ENCODE measurements at regions of chr21 and their contacts with region 1.

Region 1: GRCh38 chr21:39388038-39388810 is 39.3 kb upstream of the HMGN1 start:
- H3K4me3 Mint-ChIP-seq: peak overlapping the region; percentile 70
- H3K27ac Mint-ChIP-seq: peak overlapping the region; percentile 69
- H3K4me1 Mint-ChIP-seq: peaks cover 25% of the 10 kb centered on the region
- H3K27me3 Mint-ChIP-seq: no peaks in the 10 kb centered on the region

Region 2: GRCh38 chr21:39183237-39184007 is 204.8 kb before region 1 on chr21 and contains the start of gene PSMG1:
- intact Hi-C with region 1: loop called (anchors 2 kb)
- H3K4me3 Mint-ChIP-seq: peak within 1 kb of the TSS; percentile 92
- H3K27ac Mint-ChIP-seq: peak within 1 kb of the TSS; percentile 96
- H3K4me1 Mint-ChIP-seq: peaks cover 31% of the 10 kb centered on the region
- H3K27me3 Mint-ChIP-seq: no peaks in the 10 kb centered on the region

Region 3: DNA sequence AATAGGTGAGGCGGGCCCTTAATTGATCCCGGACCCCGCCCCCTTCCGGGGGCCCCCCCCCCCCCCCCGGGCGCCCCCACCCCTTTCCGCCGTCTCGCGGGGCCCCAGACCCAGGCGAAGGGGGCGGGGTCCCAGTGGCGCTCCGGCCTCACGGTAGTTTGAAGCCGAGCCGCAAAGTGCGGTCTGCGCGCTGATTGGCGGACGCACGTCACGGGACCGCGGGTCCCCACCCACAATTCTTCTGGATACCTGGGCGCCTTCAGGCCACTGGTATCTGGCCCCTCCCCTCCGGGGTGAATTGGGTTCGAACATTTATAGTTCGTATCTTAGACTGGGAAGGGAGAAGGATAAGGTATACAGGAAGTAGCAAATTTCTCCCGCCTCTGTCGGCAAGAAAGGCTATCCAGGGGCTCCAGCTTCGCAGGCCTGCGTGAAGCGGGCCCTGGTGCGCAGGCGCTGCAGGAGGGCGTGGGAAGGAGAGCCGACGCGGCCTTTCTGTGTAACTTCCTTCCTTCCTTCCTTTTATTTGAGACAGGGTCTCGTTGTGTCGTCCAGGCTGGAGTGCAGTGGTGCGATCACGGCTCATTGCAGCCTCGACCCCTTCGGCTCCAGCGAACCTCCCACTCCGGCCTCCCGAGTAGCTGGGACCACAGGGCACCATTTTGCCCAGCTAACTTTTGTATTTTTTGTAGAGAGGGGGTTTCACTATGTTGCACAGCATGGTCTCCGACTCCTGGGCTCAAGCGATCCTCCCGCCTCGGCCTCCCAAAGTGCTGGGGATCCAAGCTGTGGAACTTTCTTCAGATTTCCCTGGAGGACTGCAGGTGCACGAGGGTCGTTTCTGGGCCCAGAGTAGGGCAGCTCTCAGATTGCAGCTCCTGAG is 38.8 kb before region 1 on chr21:
- intact Hi-C with region 1: loop called (anchors 1 kb)
- H3K4me3 Mint-ChIP-seq: peak overlapping the region; percentile 96
- H3K27ac Mint-ChIP-seq: peak overlapping the region; percentile 94
- H3K4me1 Mint-ChIP-seq: peaks cover 30% of the 10 kb centered on the region
- H3K27me3 Mint-ChIP-seq: no peaks in the 10 kb centered on the region